Gastrocnemius medialis (tissue), 4 donors: ENCODE measurements at regions of chr10 and their contacts with region 1.

Region 1: GRCh38 chr10:62816331-62817120 is at the start of gene EGR2:
- DNase-seq: peak; percentile 86 to 89
- ATAC-seq: peak; percentile 88 to 89
- H3K4me3 ChIP-seq: peak within 1 kb of the TSS; percentile 76 to 99 (median 92)
- H3K27ac ChIP-seq: peak within 1 kb of the TSS; percentile 86 to 94 (median 87)
- H3K4me1 ChIP-seq: peaks cover 15 to 32% of the 10 kb centered on the region in 2 donors
- H3K27me3 ChIP-seq: peaks cover 24 to 25% (median 24%) of the 10 kb centered on the region in 3 donors
- CTCF ChIP-seq: no peak
- POLR2A ChIP-seq: peak in 1 of 2 donors; percentile 11
- total RNA-seq, gene EGR2: 0.40 to 1.5 (median 0.76) TPM in 3 of 4 donors, not detected in the other

Region 2: GRCh38 chr10:62577666-62578291 is 238.7 kb before region 1 on chr10:
- in situ Hi-C with region 1: no loop called
- intact Hi-C with region 1: no loop called
- DNase-seq: no peak
- ATAC-seq: no peak
- H3K4me3 ChIP-seq: no peak overlapping the region
- H3K27ac ChIP-seq: no peak overlapping the region
- H3K4me1 ChIP-seq: no peaks in the 10 kb centered on the region
- H3K27me3 ChIP-seq: peaks cover 0 to 3% (median 0%) of the 10 kb centered on the region in 3 donors
- CTCF ChIP-seq: no peak
- POLR2A ChIP-seq: no peak

Region 3: GRCh38 chr10:62594093-62594520 is 222.4 kb before region 1 on chr10:
- in situ Hi-C with region 1: no loop called
- intact Hi-C with region 1: loop called (anchors 1 kb)
- DNase-seq: peak; percentile 12 to 27
- ATAC-seq: peak; percentile 74 to 88
- H3K4me3 ChIP-seq: no peak overlapping the region
- H3K27ac ChIP-seq: no peak overlapping the region
- H3K4me1 ChIP-seq: no peaks in the 10 kb centered on the region
- H3K27me3 ChIP-seq: no peaks in the 10 kb centered on the region
- CTCF ChIP-seq: peak; percentile 61 to 76 (median 73)
- POLR2A ChIP-seq: no peak

Region 4: DNA sequence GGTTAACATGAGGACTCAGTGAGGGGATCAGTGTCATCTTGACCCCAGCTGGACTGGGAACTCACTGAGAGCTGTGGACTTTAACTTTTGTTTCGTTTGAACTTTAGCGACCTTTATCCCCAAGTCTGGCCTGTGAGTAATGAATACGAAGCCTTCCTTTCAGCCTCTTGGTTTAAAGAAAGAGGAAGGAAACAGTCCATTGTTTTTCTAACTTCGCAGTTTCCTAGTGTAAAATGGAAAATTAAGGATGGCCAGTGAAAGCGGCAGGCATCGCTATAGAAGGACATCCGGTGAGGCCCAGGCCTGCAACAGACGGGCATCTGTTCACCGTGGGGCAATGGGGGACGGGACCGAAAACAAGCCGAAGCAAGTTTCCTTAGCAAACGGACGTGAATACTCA is 56.1 kb before region 1 on chr10:
- in situ Hi-C with region 1: no loop called
- intact Hi-C with region 1: loop called (anchors 5 kb)
- DNase-seq: no peak
- ATAC-seq: no peak
- H3K4me3 ChIP-seq: no peak overlapping the region
- H3K27ac ChIP-seq: peak overlapping the region in 3 of 4 donors; percentile 31 to 66 (median 47)
- H3K4me1 ChIP-seq: peaks cover 4 to 27% of the 10 kb centered on the region in 2 donors
- H3K27me3 ChIP-seq: no peaks in the 10 kb centered on the region
- CTCF ChIP-seq: no peak
- POLR2A ChIP-seq: no peak

Region 5: GRCh38 chr10:63083904-63084689 is 267.6 kb after region 1 on chr10:
- in situ Hi-C with region 1: no loop called
- intact Hi-C with region 1: loop called (anchors 2 kb)
- DNase-seq: peak; percentile 52 to 64
- ATAC-seq: peak; percentile 98 to 99
- H3K4me3 ChIP-seq: no peak overlapping the region
- H3K27ac ChIP-seq: no peak overlapping the region
- H3K4me1 ChIP-seq: no peaks in the 10 kb centered on the region
- H3K27me3 ChIP-seq: no peaks in the 10 kb centered on the region
- CTCF ChIP-seq: peak; percentile 56 to 72 (median 62)
- POLR2A ChIP-seq: no peak

Region 6: GRCh38 chr10:63133056-63133820 is 316.7 kb after region 1 on chr10 and contains the start of gene NRBF2:
- in situ Hi-C with region 1: loop called in 1 of 4 experiments (anchors 25 kb)
- intact Hi-C with region 1: no loop called
- DNase-seq: peak; percentile 94 to 98
- ATAC-seq: peak; percentile 90 to 95
- H3K4me3 ChIP-seq: peak within 1 kb of the TSS; percentile 64 to 94 (median 84)
- H3K27ac ChIP-seq: peak within 1 kb of the TSS; percentile 90 to 96 (median 96)
- H3K4me1 ChIP-seq: peaks cover 33 to 36% of the 10 kb centered on the region in 2 donors
- H3K27me3 ChIP-seq: no peaks in the 10 kb centered on the region
- CTCF ChIP-seq: peak in 2 of 5 experiments; percentile 19 to 31
- POLR2A ChIP-seq: peak; percentile 97 to 99
- total RNA-seq, gene NRBF2: 10.2 to 29.2 (median 13.3) TPM

Region 7: GRCh38 chr10:63268798-63269503 is 452.4 kb after region 1 on chr10:
- in situ Hi-C with region 1: no loop called
- intact Hi-C with region 1: loop called (anchors 10 kb)
- DNase-seq: peak; percentile 95
- ATAC-seq: peak; percentile 98
- H3K4me3 ChIP-seq: peak overlapping the region; percentile 51 to 64 (median 54)
- H3K27ac ChIP-seq: peak overlapping the region; percentile 88 to 96 (median 90)
- H3K4me1 ChIP-seq: peaks cover 26% of the 10 kb centered on the region in 2 donors
- H3K27me3 ChIP-seq: no peaks in the 10 kb centered on the region
- CTCF ChIP-seq: peak; percentile 51 to 62 (median 55)
- POLR2A ChIP-seq: peak; percentile 82 to 94